ENCODE measurements at regions of chr12 and their contacts with region 1.

Region 1: DNA sequence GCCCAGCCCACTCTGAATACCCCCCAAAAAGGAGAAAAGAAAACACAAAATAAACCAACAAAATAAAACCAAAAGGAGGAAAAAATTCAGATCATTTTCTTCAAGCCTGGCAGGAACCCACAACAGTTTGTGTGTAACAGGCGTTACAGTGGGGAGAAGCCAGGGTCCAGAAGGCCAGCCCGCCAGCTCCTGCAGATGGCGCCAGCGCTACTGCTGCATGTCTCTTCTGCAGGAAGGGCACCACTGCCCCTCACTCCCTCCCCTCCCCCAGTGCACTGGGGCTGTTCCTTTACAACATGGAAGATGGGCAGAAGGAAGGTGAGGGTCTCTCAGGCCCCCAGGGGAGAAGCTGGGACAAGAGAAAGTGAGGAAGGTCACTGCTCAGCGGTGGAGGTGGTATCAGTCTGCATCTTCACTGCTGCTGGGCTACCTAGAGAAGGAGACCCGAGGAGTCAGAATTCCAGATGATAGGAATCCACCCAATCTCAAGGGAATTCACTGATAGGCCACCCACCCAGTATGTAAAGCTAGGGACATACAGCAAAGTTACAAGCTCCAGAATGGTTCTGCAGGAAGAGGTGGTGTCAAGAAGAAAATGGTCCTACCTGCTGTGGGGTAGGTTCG is 2.3 kb upstream of the NOP2 start:
- DNase-seq: peak in 1 of 3 donors; percentile 17
- H3K4me3 ChIP-seq: no peak overlapping the region
- H3K4me3 Mint-ChIP-seq: no peak overlapping the region
- H3K27ac ChIP-seq: no peak overlapping the region
- H3K27ac Mint-ChIP-seq: peak overlapping the region in 1 of 7 donors; percentile 26
- H3K4me1 ChIP-seq: peaks cover 15 to 30% of the 10 kb centered on the region in 2 donors
- H3K4me1 Mint-ChIP-seq: peaks cover 26% of the 10 kb centered on the region
- H3K27me3 ChIP-seq: no peaks in the 10 kb centered on the region
- H3K27me3 Mint-ChIP-seq: peaks cover 0 to 2% (median 0%) of the 10 kb centered on the region in 3 donors
- CTCF ChIP-seq: peak; percentile 45

Region 2: DNA sequence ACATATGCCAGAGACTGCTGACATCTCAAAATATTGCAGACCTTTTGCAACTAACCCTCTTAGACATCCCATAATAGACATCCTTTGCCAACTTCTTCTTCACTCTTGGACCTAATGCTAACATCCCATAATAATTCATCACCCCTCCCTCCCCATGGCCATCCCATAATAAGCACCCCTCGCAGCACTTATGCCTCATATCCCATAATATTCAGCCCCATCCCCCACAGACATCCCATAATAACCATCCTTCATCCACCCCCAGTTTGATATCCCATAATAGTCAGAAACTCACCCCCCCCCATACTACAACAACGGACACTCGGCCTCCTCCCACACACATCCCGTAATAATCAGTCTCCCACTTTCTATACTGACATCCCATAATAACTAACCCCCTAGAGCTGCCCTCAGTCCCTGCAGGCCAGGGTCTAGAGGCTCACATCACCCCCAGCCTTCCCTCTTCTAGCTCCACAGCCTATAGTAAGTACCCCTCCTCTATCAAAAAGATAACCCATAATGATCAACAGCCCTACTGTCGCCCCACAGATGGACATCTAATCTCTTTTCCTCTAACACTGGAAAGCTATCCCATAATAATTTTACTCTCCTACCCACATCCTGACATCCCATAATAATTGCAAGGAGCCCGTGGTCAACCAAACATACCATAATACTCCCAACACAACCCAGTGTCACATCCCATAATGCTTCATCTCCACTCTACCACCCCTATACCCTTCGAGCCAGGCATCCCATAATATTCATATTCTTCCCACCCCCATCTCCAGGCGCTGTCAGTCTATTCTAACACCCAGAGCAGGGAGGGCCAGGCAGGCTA is 37.6 kb after region 1 on chr12:
- intact Hi-C with region 1: loop called in 1 of 2 experiments (anchors 5 kb)
- DNase-seq: peak in 1 of 3 donors; percentile 55
- H3K4me3 ChIP-seq: peak overlapping the region in 1 of 3 experiments; percentile 94
- H3K4me3 Mint-ChIP-seq: no peak overlapping the region
- H3K27ac ChIP-seq: peak overlapping the region; percentile 37 to 77
- H3K27ac Mint-ChIP-seq: no peak overlapping the region
- H3K4me1 ChIP-seq: peaks cover 50 to 61% of the 10 kb centered on the region in 2 donors
- H3K4me1 Mint-ChIP-seq: peaks cover 47% of the 10 kb centered on the region
- H3K27me3 ChIP-seq: no peaks in the 10 kb centered on the region
- H3K27me3 Mint-ChIP-seq: peaks cover 0 to 2% (median 0%) of the 10 kb centered on the region in 3 donors
- CTCF ChIP-seq: no peak